Naive thymus-derived CD4-positive, alpha-beta T cell (primary cell): ENCODE measurements at regions of chr1 and their contacts with region 1.

Region 1: GRCh38 chr1:117627546-117628130 is 21.8 kb downstream of the TENT5C start:
- DNase-seq: no peak
- ATAC-seq: no peak
- H3K4me3 ChIP-seq: no peak overlapping the region
- H3K4me3 Mint-ChIP-seq: no peak overlapping the region
- H3K27ac ChIP-seq: no peak overlapping the region
- H3K27ac Mint-ChIP-seq: peak overlapping the region in 1 of 9 donors; percentile 34
- H3K4me1 ChIP-seq: peaks cover 0 to 6% of the 10 kb centered on the region in 2 donors
- H3K4me1 Mint-ChIP-seq: peaks cover 0 to 36% (median 8%) of the 10 kb centered on the region in 7 donors
- H3K27me3 ChIP-seq: no peaks in the 10 kb centered on the region
- H3K27me3 Mint-ChIP-seq: peaks cover 0 to 20% (median 0%) of the 10 kb centered on the region in 5 donors

Region 2: DNA sequence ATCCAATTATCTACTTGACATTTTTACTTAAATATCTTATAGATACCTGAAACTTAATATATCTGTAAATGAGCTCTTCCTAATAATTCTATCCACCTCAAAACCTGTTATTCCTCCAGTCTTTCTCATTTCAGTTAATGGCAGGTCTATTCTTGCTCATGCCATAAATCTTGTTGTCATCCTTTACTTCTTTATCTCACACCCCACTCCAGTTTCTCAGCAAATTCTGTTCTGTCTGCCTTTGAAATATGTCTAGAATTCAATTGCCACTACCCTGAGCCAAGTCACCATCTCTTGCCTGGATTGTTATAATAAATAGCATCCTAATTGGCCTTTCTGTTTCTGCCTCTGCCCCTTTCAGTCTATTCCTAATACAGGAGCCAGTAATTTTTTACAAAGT is 154.6 kb before region 1 on chr1:
- CTCF ChIA-PET with region 1: no interaction called
- POLR2A ChIA-PET with region 1: no interaction called
- intact Hi-C with region 1: no loop called
- DNase-seq: no peak
- ATAC-seq: no peak
- H3K4me3 ChIP-seq: no peak overlapping the region
- H3K4me3 Mint-ChIP-seq: no peak overlapping the region
- H3K27ac ChIP-seq: no peak overlapping the region
- H3K27ac Mint-ChIP-seq: no peak overlapping the region
- H3K4me1 ChIP-seq: no peaks in the 10 kb centered on the region
- H3K4me1 Mint-ChIP-seq: no peaks in the 10 kb centered on the region
- H3K27me3 ChIP-seq: no peaks in the 10 kb centered on the region
- H3K27me3 Mint-ChIP-seq: no peaks in the 10 kb centered on the region

Region 3: GRCh38 chr1:117612517-117613248 is 15.0 kb before region 1 on chr1:
- CTCF ChIA-PET with region 1: interaction called, 5 read pairs
- POLR2A ChIA-PET with region 1: interaction called, 6 read pairs
- intact Hi-C with region 1: loop called in 1 of 2 experiments (anchors 2 kb)
- DNase-seq: no peak
- ATAC-seq: peak; percentile 29
- H3K4me3 ChIP-seq: no peak overlapping the region
- H3K4me3 Mint-ChIP-seq: no peak overlapping the region
- H3K27ac ChIP-seq: no peak overlapping the region
- H3K27ac Mint-ChIP-seq: no peak overlapping the region
- H3K4me1 ChIP-seq: peaks cover 15 to 83% of the 10 kb centered on the region in 2 donors
- H3K4me1 Mint-ChIP-seq: peaks cover 43 to 79% (median 63%) of the 10 kb centered on the region in 7 donors
- H3K27me3 ChIP-seq: no peaks in the 10 kb centered on the region
- H3K27me3 Mint-ChIP-seq: peaks cover 0 to 12% (median 0%) of the 10 kb centered on the region in 5 donors

Region 4: DNA sequence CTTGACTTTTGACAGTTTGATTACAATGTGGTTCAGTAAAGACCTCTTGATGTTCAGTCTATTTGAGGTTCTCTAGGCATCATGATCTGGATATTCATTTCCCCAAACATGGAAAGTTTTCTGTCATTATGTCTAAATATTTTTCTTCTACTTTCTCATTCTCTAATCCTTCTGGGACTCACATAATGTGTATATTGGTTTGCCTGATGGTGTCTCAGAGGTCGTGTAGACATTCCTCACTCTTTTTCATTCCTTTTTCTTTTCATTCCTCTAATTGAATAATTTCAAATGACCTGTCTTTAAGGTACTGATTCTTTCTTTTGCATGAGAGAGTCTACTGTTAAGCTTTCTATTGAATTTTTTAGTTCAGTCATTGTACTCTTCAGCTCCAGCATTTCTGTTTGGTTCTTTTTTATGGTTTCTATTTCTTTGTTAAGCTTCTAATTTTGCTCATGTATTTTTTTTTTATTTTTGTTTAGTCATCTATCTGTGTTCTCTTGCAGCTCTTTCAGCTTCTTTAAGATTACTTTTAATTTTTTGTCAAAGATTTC is 143.4 kb after region 1 on chr1:
- CTCF ChIA-PET with region 1: no interaction called
- POLR2A ChIA-PET with region 1: no interaction called
- intact Hi-C with region 1: no loop called
- DNase-seq: no peak
- ATAC-seq: no peak
- H3K4me3 ChIP-seq: no peak overlapping the region
- H3K4me3 Mint-ChIP-seq: no peak overlapping the region
- H3K27ac ChIP-seq: no peak overlapping the region
- H3K27ac Mint-ChIP-seq: peak overlapping the region in 1 of 9 donors; percentile 26
- H3K4me1 ChIP-seq: no peaks in the 10 kb centered on the region
- H3K4me1 Mint-ChIP-seq: no peaks in the 10 kb centered on the region
- H3K27me3 ChIP-seq: no peaks in the 10 kb centered on the region
- H3K27me3 Mint-ChIP-seq: peaks cover 13 to 49% (median 38%) of the 10 kb centered on the region in 5 donors